Activated B cell treated with CpG ODN at 0.5 μM for 24 hours (primary cell): ENCODE measurements at regions of chr15 and their contacts with region 1.

Region 1: GRCh38 chr15:57306161-57306943 is 70.0 kb upstream of the CGNL1 start:
- DNase-seq: peak; percentile 91
- ATAC-seq: peak; percentile 71
- H3K4me3 Mint-ChIP-seq: peak overlapping the region; percentile 90
- H3K27ac Mint-ChIP-seq: peak overlapping the region; percentile 88
- H3K4me1 Mint-ChIP-seq: peaks cover 76% of the 10 kb centered on the region
- H3K27me3 Mint-ChIP-seq: no peaks in the 10 kb centered on the region
- CTCF ChIP-seq: peak; percentile 45

Region 2: GRCh38 chr15:56732921-56733797 is 573.2 kb before region 1 on chr15 and contains the start of gene ZNF280D:
- CTCF ChIA-PET with region 1: no interaction called
- POLR2A ChIA-PET with region 1: no interaction called
- intact Hi-C with region 1: loop called (anchors 5 kb)
- DNase-seq: peak; percentile 70
- ATAC-seq: peak; percentile 87
- H3K4me3 Mint-ChIP-seq: peak within 1 kb of the TSS; percentile 96
- H3K27ac Mint-ChIP-seq: peak within 1 kb of the TSS; percentile 93
- H3K4me1 Mint-ChIP-seq: peaks cover 31% of the 10 kb centered on the region
- H3K27me3 Mint-ChIP-seq: no peaks in the 10 kb centered on the region
- CTCF ChIP-seq: no peak
- total RNA-seq, gene ZNF280D: 37.9 and 40.0 TPM in 2 replicates

Region 3: GRCh38 chr15:57045741-57046382 is 260.5 kb before region 1 on chr15:
- CTCF ChIA-PET with region 1: no interaction called
- POLR2A ChIA-PET with region 1: no interaction called
- intact Hi-C with region 1: no loop called
- DNase-seq: no peak
- ATAC-seq: peak; percentile 42
- H3K4me3 Mint-ChIP-seq: no peak overlapping the region
- H3K27ac Mint-ChIP-seq: no peak overlapping the region
- H3K4me1 Mint-ChIP-seq: peaks cover 36% of the 10 kb centered on the region
- H3K27me3 Mint-ChIP-seq: no peaks in the 10 kb centered on the region
- CTCF ChIP-seq: no peak

Region 4: GRCh38 chr15:57146506-57147201 is 159.7 kb before region 1 on chr15:
- CTCF ChIA-PET with region 1: interaction called, 202 read pairs
- POLR2A ChIA-PET with region 1: interaction called, 23 read pairs
- intact Hi-C with region 1: loop called (anchors 1 kb)
- DNase-seq: no peak
- ATAC-seq: no peak
- H3K4me3 Mint-ChIP-seq: peak overlapping the region; percentile 48
- H3K27ac Mint-ChIP-seq: no peak overlapping the region
- H3K4me1 Mint-ChIP-seq: peaks cover 16% of the 10 kb centered on the region
- H3K27me3 Mint-ChIP-seq: no peaks in the 10 kb centered on the region
- CTCF ChIP-seq: peak; percentile 42

Region 5: GRCh38 chr15:57218826-57219576 is 87.4 kb before region 1 on chr15:
- CTCF ChIA-PET with region 1: interaction called, 16 read pairs
- POLR2A ChIA-PET with region 1: interaction called, 8 read pairs
- intact Hi-C with region 1: loop called (anchors 2 kb)
- DNase-seq: no peak
- ATAC-seq: peak; percentile 65
- H3K4me3 Mint-ChIP-seq: peak overlapping the region; percentile 55
- H3K27ac Mint-ChIP-seq: no peak overlapping the region
- H3K4me1 Mint-ChIP-seq: peaks cover 40% of the 10 kb centered on the region
- H3K27me3 Mint-ChIP-seq: no peaks in the 10 kb centered on the region
- CTCF ChIP-seq: no peak

Region 6: GRCh38 chr15:57527382-57528091 is 221.2 kb after region 1 on chr15:
- CTCF ChIA-PET with region 1: interaction called, 28 read pairs
- POLR2A ChIA-PET with region 1: no interaction called
- intact Hi-C with region 1: loop called (anchors 1 kb)
- DNase-seq: peak; percentile 25
- ATAC-seq: peak; percentile 99
- H3K4me3 Mint-ChIP-seq: no peak overlapping the region
- H3K27ac Mint-ChIP-seq: no peak overlapping the region
- H3K4me1 Mint-ChIP-seq: peaks cover 11% of the 10 kb centered on the region
- H3K27me3 Mint-ChIP-seq: peaks cover 3% of the 10 kb centered on the region
- CTCF ChIP-seq: no peak